Panc1 (cell line): ENCODE measurements at regions of chr11 and their contacts with region 1.

Region 1: DNA sequence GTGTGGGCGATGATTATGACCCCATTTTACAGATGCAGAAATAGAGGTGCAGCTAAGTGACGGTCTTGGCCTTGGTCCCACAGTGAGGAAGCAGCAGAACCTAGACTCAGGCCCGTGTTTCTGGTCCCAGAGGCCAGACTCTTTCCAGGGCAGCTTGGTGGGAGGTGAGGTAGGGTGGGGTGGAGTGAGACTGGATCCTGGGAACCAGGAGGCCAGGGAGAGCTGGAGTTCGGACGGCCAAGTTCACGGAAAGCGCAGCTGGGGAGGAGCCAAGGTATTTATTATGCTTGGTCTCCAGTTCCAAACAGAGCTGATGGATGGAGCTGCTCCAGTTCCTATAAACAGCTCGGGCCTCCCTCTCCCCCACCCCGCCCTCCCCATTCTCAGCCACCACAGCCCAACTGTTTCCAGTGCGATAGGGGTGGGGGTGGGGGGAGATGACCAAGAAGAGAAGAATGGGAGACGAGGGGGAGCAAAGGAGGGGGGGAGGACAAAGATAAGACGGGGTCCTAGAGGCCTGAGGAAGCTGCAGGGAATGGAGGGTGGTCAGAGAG is 16.2 kb downstream of the LRRC32 start:
- DNase-seq: no peak
- ATAC-seq: no peak
- H3K4me3 ChIP-seq: no peak overlapping the region
- H3K27ac ChIP-seq: no peak overlapping the region
- H3K4me1 ChIP-seq: no peaks in the 10 kb centered on the region
- H3K27me3 ChIP-seq: peaks cover 9% of the 10 kb centered on the region
- CTCF ChIP-seq: no peak

Region 2: GRCh38 chr11:76598426-76598839 is 55.9 kb before region 1 on chr11:
- CTCF ChIA-PET with region 1: no interaction called
- POLR2A ChIA-PET with region 1: no interaction called
- in situ Hi-C with region 1: no loop called
- intact Hi-C with region 1: no loop called
- DNase-seq: peak; percentile 24
- ATAC-seq: peak; percentile 87
- H3K4me3 ChIP-seq: no peak overlapping the region
- H3K27ac ChIP-seq: no peak overlapping the region
- H3K4me1 ChIP-seq: no peaks in the 10 kb centered on the region; the same call in 1 of the 2 replicates
- H3K27me3 ChIP-seq: no peaks in the 10 kb centered on the region
- CTCF ChIP-seq: peak; percentile 91

Region 3: GRCh38 chr11:76626921-76627401 is 27.4 kb before region 1 on chr11:
- CTCF ChIA-PET with region 1: no interaction called
- POLR2A ChIA-PET with region 1: no interaction called
- in situ Hi-C with region 1: no loop called
- intact Hi-C with region 1: no loop called
- DNase-seq: no peak
- ATAC-seq: no peak
- H3K4me3 ChIP-seq: no peak overlapping the region
- H3K27ac ChIP-seq: no peak overlapping the region
- H3K4me1 ChIP-seq: no peaks in the 10 kb centered on the region
- H3K27me3 ChIP-seq: no peaks in the 10 kb centered on the region
- CTCF ChIP-seq: no peak

Region 4: GRCh38 chr11:76705826-76706225 is 51.5 kb after region 1 on chr11:
- CTCF ChIA-PET with region 1: no interaction called
- POLR2A ChIA-PET with region 1: interaction called, 17 read pairs
- in situ Hi-C with region 1: no loop called
- intact Hi-C with region 1: no loop called
- DNase-seq: no peak
- ATAC-seq: no peak
- H3K4me3 ChIP-seq: no peak overlapping the region
- H3K27ac ChIP-seq: no peak overlapping the region
- H3K4me1 ChIP-seq: no peaks in the 10 kb centered on the region
- H3K27me3 ChIP-seq: no peaks in the 10 kb centered on the region
- CTCF ChIP-seq: no peak